AG04449 (cell line): ENCODE measurements at regions of chr19 and their contacts with region 1.

Region 1: GRCh38 chr19:9768175-9769112 is at the start of gene ZNF846:
- DNase-seq: peak; percentile 63
- H3K4me3 ChIP-seq: peak within 1 kb of the TSS; percentile 76
- CTCF ChIP-seq: no peak

Region 2: DNA sequence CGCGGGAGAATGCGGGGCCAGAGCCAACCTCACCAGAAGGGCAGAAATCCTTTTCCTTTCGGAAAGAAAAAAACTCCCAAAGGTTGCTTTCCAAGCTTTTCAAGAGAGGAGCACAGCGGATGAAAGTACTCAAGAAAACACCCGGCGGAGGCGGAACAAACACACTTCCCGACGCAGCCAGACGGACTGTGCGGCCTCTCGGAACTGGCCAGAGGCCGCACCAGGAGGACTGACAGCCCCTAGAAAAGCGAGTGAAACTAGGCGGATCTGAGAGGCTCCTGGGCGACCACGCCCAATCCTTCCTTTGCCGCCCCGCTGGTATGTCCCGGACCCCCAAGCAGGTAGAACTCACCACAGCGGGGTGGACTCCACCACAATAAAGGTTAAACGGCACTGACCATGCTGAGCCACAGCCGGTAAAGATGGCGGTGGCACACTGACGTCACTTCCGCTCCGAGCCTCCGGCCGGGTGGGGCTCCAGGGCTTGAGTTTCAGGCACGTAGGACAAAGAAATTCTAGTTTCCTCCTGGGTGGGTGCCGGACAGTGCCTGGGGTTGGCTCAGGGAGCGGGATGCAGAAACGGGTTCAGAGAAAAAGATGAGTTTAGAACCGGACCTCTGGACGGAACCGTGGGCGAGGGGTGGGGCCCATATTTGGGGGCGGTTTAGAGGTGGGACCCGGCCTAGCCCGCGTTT is 93.6 kb before region 1 on chr19 and contains the start of gene ZNF562:
- CTCF ChIA-PET with region 1: no interaction called
- POLR2A ChIA-PET with region 1: interaction called, 11 read pairs
- DNase-seq: peak; percentile 16
- H3K4me3 ChIP-seq: peak within 1 kb of the TSS; percentile 76
- CTCF ChIP-seq: no peak

Region 3: GRCh38 chr19:9751446-9751845 is 17.0 kb before region 1 on chr19:
- CTCF ChIA-PET with region 1: no interaction called
- POLR2A ChIA-PET with region 1: no interaction called
- DNase-seq: no peak
- H3K4me3 ChIP-seq: no peak overlapping the region
- CTCF ChIP-seq: no peak